ENCODE measurements at regions of chr17 and their contacts with region 1.

Region 1: DNA sequence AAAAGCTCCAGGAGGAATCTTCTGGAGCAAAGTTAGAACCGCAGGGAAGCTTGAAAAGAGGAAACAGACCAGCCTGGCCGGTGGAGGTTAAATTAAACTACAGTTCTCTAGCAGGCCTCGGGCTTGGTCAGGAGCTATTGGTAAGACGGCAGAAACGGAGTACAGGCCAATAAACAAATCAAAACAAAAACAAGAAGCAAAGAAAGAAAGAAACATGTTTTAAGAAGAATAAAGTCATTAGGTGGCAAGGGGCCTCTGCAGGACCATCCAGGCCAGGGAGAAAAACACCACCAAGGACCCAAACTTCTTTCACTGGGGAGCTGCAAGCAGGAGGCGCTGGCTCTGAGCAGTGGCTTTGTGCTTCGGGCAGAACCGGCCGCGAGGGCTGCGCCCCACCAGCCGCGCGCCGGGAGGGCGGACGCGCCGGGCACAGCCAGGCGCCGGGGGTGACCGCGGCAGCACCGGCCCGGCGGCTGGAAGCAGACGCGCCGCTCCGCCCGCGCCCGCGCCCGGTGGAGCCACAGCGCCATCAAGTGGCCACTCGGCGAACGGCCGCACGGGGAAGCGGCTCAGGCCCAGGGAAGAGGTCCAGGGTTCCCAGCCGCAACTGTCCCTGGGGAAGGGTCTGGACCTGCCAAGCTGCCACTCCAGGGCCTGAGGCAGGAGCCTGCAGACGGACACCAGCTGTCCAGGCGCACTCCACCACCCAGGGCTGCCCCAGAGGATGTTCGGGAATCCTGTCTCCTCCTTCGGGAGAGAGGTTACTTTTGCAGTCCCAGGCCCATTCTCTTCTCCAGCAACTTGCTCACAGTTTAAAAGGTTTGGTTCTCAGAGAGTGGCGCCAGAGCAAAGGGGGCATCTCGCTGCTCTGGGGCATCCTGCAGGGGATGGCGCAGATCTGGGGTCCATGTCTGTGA is 419.4 kb downstream of the SOX9 start:
- DNase-seq: peak in 1 of 2 donors; percentile 71
- H3K4me3 ChIP-seq: peak overlapping the region in 1 of 2 donors; percentile 30
- H3K27ac ChIP-seq: no peak overlapping the region
- H3K4me1 ChIP-seq: peaks cover 0 to 4% of the 10 kb centered on the region in 2 donors
- H3K27me3 ChIP-seq: no peaks in the 10 kb centered on the region
- CTCF ChIP-seq: peak; percentile 66 to 95 (median 82)

Region 2: DNA sequence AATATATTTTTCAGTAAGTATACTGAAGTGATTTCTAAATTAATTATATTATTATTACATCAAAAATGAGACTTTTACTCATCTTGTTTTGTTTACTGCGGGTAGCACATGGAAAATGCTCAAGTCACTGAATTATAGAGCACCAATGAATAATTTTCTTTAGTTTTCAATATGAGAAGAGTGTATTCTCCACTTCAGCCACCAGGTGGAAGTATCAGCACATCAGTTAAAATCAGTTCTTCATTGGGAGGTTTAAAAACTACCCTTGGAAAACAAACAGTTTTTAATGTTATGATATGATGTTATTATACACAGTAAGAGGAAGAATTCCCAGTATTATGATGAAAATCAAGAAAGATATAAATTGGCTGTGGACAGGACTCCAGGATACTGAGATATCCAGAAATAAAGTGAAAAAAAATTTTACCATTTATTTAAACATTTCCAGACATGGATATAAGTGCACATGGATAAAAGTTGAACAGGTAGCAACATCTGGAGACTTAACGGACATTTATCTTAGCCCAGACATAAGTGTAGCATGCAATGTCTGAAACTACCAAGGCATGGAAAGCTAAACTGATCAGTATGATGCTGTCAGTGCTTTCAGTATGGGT is 1903.6 kb before region 1 on chr17:
- intact Hi-C with region 1: loop called (anchors 1 kb)
- DNase-seq: no peak
- H3K4me3 ChIP-seq: no peak overlapping the region
- H3K27ac ChIP-seq: no peak overlapping the region
- H3K4me1 ChIP-seq: no peaks in the 10 kb centered on the region
- H3K27me3 ChIP-seq: no peaks in the 10 kb centered on the region
- CTCF ChIP-seq: peak in 2 of 3 experiments; percentile 48 to 63